ENCODE measurements at regions of chr6 and their contacts with region 1.

Region 1: DNA sequence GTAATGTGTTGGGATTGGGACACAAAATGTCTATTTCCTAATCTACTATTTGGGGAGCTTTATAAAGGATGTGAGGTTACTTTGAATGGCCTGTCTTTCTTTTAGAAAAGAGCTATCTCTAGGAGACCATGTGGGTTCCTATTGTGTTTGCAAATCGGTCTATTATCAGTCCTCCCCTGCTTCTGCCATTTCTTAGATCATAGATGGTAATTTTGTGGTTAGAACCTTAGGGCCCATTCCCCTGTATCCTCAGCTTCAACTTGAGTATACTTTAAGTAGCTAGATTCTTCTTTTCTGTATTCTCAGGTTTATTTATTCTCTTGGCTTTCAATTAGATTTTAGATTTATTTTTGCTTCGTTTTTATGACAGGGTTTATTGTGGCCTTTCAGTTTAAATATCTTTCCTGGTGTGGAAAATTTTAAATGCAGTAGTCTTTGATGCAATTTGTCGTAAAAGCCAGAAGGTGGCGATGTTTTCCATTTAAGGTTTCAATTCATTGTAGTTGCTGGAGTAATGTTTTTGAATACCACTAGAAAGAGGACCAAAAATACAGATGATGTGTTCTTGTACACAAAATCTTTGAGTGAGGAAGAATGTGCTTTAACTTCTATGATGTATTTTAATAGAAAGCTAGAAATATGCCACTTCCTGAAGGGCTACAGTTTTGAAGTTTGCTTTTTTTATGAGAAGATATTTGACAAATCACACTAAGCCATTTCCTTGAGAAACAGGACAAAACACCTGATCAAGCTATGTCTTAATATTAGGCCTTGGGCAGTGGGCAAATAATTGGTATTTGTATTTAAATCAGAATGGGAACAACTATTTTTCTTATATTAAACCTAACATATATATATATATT is 20.3 kb downstream of the TBPL1 start:
- DNase-seq: peak; percentile 42
- H3K27ac ChIP-seq: no peak overlapping the region
- CTCF ChIP-seq: peak; percentile 80

Region 2: GRCh38 chr6:134063966-134064445 is 90.7 kb after region 1 on chr6:
- CTCF ChIA-PET with region 1: interaction called, 18 read pairs
- POLR2A ChIA-PET with region 1: no interaction called
- DNase-seq: peak; percentile 70
- H3K27ac ChIP-seq: no peak overlapping the region
- CTCF ChIP-seq: peak; percentile 82

Region 3: GRCh38 chr6:134097114-134097707 is 123.9 kb after region 1 on chr6:
- CTCF ChIA-PET with region 1: interaction called, 10 read pairs
- POLR2A ChIA-PET with region 1: no interaction called
- DNase-seq: peak; percentile 70
- H3K27ac ChIP-seq: no peak overlapping the region
- CTCF ChIP-seq: peak; percentile 62